Endothelial cell of umbilical vein (primary cell): ENCODE measurements at regions of chr2 and their contacts with region 1.

Region 1: GRCh38 chr2:65164426-65164891 is 34.6 kb upstream of the RAB1A start:
- DNase-seq: no peak
- H3K4me3 ChIP-seq: no peak overlapping the region
- H3K27ac ChIP-seq: no peak overlapping the region
- H3K4me1 ChIP-seq: no peaks in the 10 kb centered on the region
- H3K27me3 ChIP-seq: peaks cover 0 to 6% of the 10 kb centered on the region in 2 experiments
- CTCF ChIP-seq: no peak
- POLR2A ChIP-seq: no peak

Region 2: DNA sequence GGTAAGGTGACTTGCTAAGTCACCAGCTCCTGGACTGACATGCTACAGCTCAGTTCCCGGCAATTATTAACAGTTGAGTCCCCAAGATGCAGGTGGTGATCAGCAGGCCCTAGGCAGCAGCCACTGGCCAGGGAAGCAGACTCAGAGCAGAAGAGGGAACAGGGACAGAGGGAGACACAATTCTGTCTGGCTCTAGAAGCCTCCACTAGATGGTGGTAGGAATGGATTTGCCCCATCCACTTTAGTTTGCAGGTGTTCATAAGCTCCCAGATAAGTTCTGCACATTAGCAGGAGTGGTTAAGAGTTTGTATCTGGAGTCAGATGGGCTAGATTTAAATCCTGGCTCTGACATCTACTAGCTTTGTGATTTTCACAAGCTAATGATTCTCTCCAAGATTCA is 200.7 kb before region 1 on chr2:
- CTCF ChIA-PET with region 1: no interaction called
- POLR2A ChIA-PET with region 1: no interaction called
- dilution Hi-C with region 1: no loop called
- intact Hi-C with region 1: no loop called
- DNase-seq: no peak
- H3K4me3 ChIP-seq: no peak overlapping the region
- H3K27ac ChIP-seq: no peak overlapping the region
- H3K4me1 ChIP-seq: no peaks in the 10 kb centered on the region
- H3K27me3 ChIP-seq: peaks cover 10% of the 10 kb centered on the region in 2 experiments
- CTCF ChIP-seq: no peak
- POLR2A ChIP-seq: no peak

Region 3: GRCh38 chr2:65070172-65070830 is 94.2 kb before region 1 on chr2:
- CTCF ChIA-PET with region 1: interaction called, 65 read pairs
- POLR2A ChIA-PET with region 1: no interaction called
- dilution Hi-C with region 1: no loop called
- intact Hi-C with region 1: loop called (anchors 1 kb)
- DNase-seq: peak; percentile 58
- H3K4me3 ChIP-seq: no peak overlapping the region
- H3K27ac ChIP-seq: peak overlapping the region; percentile 35
- H3K4me1 ChIP-seq: peaks cover 36% of the 10 kb centered on the region
- H3K27me3 ChIP-seq: no peaks in the 10 kb centered on the region
- CTCF ChIP-seq: no peak
- POLR2A ChIP-seq: no peak

Region 4: DNA sequence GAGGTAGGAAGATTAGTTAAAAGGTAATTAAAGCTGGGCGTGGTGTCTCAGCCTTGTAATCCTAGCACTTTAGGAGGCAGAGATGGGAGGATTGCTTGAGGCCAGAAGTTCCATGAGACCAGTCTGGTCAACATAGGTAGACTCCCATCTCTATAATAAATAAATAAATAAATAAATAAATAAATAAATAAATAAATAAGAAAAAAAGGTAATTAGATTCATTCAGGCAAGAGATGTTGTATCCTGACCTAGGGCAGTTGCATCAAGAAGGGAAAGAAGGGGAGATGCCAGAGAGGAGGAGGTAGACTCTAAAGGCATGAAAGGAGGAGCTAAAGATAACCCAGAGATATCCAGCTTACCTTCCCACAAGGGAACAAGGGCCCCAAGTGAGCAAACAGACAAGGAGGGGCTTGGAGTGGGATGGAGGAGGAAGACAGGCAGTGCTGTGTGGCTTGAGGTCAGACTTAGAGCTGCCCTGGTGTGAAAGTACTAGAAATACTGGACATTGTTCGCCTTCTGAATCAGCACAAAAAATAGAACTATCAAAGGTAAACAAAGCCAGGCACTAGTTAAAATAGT is 27.2 kb before region 1 on chr2:
- CTCF ChIA-PET with region 1: interaction called, 14 read pairs
- POLR2A ChIA-PET with region 1: no interaction called
- dilution Hi-C with region 1: no loop called
- intact Hi-C with region 1: no loop called
- DNase-seq: no peak
- H3K4me3 ChIP-seq: no peak overlapping the region
- H3K27ac ChIP-seq: no peak overlapping the region
- H3K4me1 ChIP-seq: no peaks in the 10 kb centered on the region
- H3K27me3 ChIP-seq: peaks cover 0 to 4% of the 10 kb centered on the region in 2 experiments
- CTCF ChIP-seq: no peak
- POLR2A ChIP-seq: no peak

Region 5: GRCh38 chr2:65309708-65310107 is 145.2 kb after region 1 on chr2:
- CTCF ChIA-PET with region 1: no interaction called
- POLR2A ChIA-PET with region 1: no interaction called
- dilution Hi-C with region 1: no loop called
- intact Hi-C with region 1: no loop called
- DNase-seq: no peak
- H3K4me3 ChIP-seq: no peak overlapping the region
- H3K27ac ChIP-seq: no peak overlapping the region
- H3K4me1 ChIP-seq: peaks cover 8% of the 10 kb centered on the region
- H3K27me3 ChIP-seq: no peaks in the 10 kb centered on the region
- CTCF ChIP-seq: no peak
- POLR2A ChIP-seq: no peak